Uterus (tissue), 4 donors: ENCODE measurements at regions of chr9 and their contacts with region 1.

Region 1: DNA sequence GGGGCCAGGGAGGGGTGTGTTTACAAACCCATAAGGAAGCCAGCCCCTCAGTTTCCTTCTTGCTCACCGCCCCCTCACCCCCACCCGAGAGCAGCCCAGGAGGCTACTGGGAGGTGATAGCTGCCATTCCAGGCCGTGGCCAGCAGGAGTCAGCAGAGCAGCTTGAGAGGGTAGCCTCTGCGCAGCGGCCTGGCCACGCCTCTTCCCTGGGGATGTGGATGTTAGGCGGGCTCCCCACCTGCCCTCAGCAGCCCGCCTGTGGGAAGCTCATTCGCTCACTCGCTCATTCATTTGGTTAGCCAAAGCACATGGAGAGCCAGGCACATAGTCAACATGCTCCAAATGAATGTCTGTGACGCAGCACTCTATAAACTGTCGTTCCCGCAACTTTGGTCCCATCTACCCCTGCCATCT is 6.1 kb upstream of the DPM2 start:
- DNase-seq: peak; percentile 90 to 92
- H3K4me3 ChIP-seq: no peak overlapping the region
- H3K27ac ChIP-seq: peak overlapping the region; percentile 8 to 43
- H3K4me1 ChIP-seq: peaks cover 0 to 5% of the 10 kb centered on the region in 2 donors
- H3K27me3 ChIP-seq: no peaks in the 10 kb centered on the region
- CTCF ChIP-seq: peak; percentile 97 to 98 (median 98)
- POLR2A ChIP-seq: no peak

Region 2: DNA sequence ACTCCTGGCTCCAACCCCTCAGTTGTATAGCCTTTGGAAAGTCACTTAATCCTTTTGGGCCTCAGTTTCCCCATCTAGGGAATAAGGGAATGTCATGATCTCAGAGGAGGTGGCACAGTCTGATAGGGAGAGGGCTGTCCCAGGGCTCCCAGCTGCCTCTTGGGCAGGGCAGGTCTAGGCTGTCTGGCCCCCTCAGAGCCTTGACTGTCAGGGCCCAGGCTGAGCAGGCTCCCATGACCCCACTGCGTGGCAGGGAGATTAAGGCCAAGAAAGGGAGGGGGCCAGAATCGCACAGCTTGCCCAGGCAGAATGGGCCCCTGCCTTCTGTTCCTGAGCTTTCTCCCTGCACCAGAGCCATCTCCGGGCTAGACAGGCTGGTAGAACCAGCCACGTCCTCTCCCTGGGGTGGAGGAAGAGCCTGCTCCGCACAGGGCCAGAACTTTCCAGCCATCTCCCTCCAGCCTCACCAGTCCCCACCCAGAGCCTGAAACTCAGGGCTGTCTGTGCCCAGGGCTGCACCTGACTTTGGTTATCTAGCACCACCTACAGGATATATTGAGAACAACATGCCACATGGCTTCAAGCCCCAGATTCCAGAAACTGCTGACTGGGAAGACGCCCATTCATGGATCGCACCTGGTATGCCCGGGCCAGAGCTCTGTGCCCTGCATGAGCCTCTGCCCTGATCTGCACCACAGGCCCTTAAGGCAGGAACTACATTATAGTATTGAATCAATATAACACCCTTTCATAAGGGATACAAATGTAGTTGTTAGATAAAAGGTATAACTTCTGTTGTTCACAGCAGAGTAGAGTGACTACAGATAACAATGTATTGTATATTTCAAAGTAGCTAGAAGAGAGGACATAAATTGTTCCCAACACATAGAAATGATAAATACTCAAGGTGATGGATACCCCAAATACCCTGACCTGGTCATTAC is 91.4 kb after region 1 on chr9:
- intact Hi-C with region 1: loop called (anchors 5 kb)
- DNase-seq: peak; percentile 72 to 83
- H3K4me3 ChIP-seq: no peak overlapping the region
- H3K27ac ChIP-seq: peak overlapping the region in 1 of 2 donors; percentile 23
- H3K4me1 ChIP-seq: no peaks in the 10 kb centered on the region
- H3K27me3 ChIP-seq: no peaks in the 10 kb centered on the region
- CTCF ChIP-seq: peak; percentile 86 to 98 (median 95)
- POLR2A ChIP-seq: no peak

Region 3: DNA sequence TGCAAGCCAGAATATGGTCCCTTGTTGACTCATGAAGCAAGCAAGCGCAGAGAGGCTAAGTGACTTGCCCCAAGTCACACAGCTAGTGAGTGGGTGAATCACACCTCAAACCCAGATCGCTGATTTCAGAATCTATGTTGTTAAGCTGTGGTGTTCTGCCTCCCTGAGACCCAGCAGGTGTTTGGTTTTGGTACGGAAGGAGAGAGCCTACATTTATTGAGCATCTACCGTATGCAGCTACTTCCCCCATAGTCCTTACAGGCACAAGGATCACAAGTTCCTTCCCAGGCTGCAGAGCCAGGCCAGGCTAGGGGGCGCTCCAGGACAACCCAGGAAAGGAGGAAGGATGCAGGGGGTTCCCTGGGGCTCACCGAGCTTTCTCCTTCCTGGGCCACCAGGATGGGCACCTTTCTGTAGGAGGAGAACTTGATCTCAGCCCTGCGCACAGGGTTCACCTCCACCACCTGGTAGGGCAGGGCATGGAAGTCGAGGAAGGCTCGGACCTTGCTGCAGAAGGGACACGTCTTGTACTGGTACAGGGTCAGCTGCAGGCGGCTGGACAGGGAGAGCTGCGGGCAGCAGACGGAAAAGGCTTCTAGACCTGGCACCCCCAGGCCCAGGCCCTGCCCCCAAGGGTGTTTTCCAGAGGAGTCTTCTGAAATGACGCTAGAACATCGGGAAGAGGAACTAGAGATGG is 181.3 kb after region 1 on chr9:
- intact Hi-C with region 1: loop called (anchors 5 kb)
- DNase-seq: peak in 1 of 2 donors; percentile 56
- H3K4me3 ChIP-seq: no peak overlapping the region
- H3K27ac ChIP-seq: no peak overlapping the region
- H3K4me1 ChIP-seq: peaks cover 5 to 14% of the 10 kb centered on the region in 2 donors
- H3K27me3 ChIP-seq: no peaks in the 10 kb centered on the region
- CTCF ChIP-seq: peak in 3 of 4 experiments; percentile 18 to 41 (median 34)
- POLR2A ChIP-seq: no peak

Region 4: GRCh38 chr9:128160603-128160987 is 216.9 kb after region 1 on chr9:
- intact Hi-C with region 1: no loop called
- DNase-seq: peak in 1 of 2 donors; percentile 35
- H3K4me3 ChIP-seq: peak overlapping the region; percentile 59 to 92
- H3K27ac ChIP-seq: peak overlapping the region; percentile 50 to 74
- H3K4me1 ChIP-seq: no peaks in the 10 kb centered on the region
- H3K27me3 ChIP-seq: no peaks in the 10 kb centered on the region
- CTCF ChIP-seq: no peak
- POLR2A ChIP-seq: no peak